Activated T-helper 1 cell treated with anti-CD3 and anti-CD28 coated beads, Interleukin-12 subunit alpha, Interleukin-12 subunit beta, Interleukin-2, Interleukin-4 antibody, amounts not matched to agents 30 ng/mL and 10 ng/mL and 1 ng/mL, durations not matched to agents 14 hours and 24 hours and 36 hours (primary cell): ENCODE measurements at regions of chr2 and their contacts with region 1.

Region 1: DNA sequence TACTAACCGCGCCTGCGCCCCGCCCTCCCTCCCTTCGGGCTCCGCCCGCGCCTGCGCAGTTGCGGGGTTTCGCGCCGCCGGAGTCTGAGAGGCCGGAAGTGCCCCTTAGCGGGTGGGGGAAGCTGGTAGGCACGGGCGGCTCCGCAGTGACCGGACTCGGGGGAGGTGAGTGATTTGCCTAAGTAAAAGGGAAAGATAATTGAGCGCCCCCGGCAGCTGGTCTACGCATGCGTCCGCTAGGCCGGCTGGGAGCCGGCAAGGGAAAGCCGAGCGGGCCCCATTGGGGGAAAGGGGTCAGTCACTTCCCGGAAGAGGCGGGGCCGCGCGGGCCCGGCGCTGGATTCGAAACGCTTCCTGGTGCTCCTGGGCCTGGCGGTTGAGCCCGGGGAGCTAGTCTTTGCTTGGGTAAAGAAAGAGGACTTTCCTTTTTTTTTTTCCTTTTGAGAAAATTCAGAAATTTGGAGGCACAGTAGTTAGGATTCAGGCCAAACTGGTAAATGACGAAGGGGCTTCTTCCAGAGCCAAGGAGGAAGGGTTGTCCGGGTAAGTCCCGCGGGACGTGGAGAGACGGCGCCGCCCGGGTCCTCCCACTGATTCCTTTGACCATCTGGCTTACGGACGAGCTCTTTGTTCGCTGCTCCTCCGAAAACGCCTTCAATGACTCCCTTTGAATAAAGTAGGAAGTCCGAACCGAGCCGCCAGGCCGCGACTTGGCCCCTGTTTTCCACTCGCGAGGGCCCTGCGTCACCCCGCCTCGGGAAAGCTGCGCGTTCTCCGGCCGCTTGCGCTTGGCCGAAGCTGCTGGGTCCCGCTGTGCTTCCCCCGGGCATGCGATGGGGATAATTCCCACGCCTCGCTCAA is at the starts of genes GEN1 and SMC6:
- DNase-seq: peak; percentile 86
- H3K4me3 Mint-ChIP-seq: peak within 1 kb of the TSS; percentile 86
- H3K27ac Mint-ChIP-seq: peak within 1 kb of the TSS; percentile 78
- H3K4me1 Mint-ChIP-seq: peaks cover 69% of the 10 kb centered on the region
- H3K27me3 Mint-ChIP-seq: no peaks in the 10 kb centered on the region
- total RNA-seq, gene GEN1: 28.1 and 31.8 TPM in 2 replicates
- total RNA-seq, gene SMC6: 27.8 and 31.0 TPM in 2 replicates

Region 2: GRCh38 chr2:17518212-17519154 is 235.6 kb before region 1 on chr2 and contains the start of gene RAD51AP2:
- intact Hi-C with region 1: loop called (anchors 10 kb)
- DNase-seq: no peak
- H3K4me3 Mint-ChIP-seq: no peak within 1 kb of the TSS
- H3K27ac Mint-ChIP-seq: no peak within 1 kb of the TSS
- H3K4me1 Mint-ChIP-seq: no peaks in the 10 kb centered on the region
- H3K27me3 Mint-ChIP-seq: peaks cover 30% of the 10 kb centered on the region
- total RNA-seq, gene RAD51AP2: not detected in 2 replicates

Region 3: GRCh38 chr2:17771956-17772355 is 17.9 kb after region 1 on chr2:
- intact Hi-C with region 1: no loop called
- DNase-seq: no peak
- H3K4me3 Mint-ChIP-seq: no peak overlapping the region
- H3K27ac Mint-ChIP-seq: no peak overlapping the region
- H3K4me1 Mint-ChIP-seq: no peaks in the 10 kb centered on the region
- H3K27me3 Mint-ChIP-seq: no peaks in the 10 kb centered on the region

Region 4: DNA sequence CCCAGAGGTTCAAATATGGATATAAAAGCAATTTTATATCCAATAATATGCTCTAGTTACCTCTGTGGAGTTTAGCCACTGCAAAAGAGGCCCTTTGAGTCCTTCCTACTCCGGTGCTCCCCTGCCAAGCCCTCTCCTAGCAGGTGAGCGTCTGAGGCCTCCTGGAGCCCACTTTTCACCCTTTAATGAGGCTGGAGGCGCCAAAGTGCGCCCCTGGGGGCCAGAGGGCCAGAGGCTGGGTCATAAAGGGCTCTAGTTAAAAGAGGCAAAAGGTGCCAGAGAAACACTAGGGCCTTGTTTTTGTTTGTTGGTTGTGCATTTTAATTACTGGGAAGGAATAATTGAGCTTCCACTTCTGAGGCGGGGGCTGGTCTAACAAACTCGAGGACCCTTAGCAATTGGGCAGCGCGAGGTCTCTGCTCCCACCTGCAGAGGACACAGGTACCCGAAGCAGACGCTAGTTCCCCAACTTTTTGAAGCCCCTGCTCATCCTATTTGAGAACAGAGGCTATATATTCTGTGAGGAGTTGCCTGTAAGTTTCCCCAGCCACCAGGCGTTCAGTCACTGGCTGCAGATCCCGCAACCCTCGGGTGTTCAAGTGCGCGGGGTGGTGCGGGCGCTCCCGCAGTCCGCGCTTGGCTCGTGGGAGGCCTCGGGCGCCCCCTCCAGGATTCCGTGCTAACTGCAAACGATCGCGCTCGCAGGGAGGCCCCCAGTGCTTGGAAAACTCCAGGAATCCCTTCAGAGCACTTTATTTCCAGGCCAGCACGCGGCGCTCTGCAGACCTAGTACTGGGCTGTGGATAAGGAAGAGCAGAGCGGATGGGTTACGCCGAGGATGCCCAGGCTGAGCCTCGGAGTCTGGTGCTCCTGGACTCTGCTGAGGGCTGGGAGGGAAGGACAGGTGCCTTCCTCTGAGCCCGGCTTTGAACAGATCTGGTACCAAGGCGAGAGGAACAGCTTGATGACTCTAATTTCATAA is 76.3 kb after region 1 on chr2:
- intact Hi-C with region 1: loop called (anchors 1 kb)
- DNase-seq: peak; percentile 16
- H3K4me3 Mint-ChIP-seq: peak overlapping the region; percentile 2
- H3K27ac Mint-ChIP-seq: no peak overlapping the region
- H3K4me1 Mint-ChIP-seq: peaks cover 6% of the 10 kb centered on the region
- H3K27me3 Mint-ChIP-seq: peaks cover 46% of the 10 kb centered on the region

Region 5: DNA sequence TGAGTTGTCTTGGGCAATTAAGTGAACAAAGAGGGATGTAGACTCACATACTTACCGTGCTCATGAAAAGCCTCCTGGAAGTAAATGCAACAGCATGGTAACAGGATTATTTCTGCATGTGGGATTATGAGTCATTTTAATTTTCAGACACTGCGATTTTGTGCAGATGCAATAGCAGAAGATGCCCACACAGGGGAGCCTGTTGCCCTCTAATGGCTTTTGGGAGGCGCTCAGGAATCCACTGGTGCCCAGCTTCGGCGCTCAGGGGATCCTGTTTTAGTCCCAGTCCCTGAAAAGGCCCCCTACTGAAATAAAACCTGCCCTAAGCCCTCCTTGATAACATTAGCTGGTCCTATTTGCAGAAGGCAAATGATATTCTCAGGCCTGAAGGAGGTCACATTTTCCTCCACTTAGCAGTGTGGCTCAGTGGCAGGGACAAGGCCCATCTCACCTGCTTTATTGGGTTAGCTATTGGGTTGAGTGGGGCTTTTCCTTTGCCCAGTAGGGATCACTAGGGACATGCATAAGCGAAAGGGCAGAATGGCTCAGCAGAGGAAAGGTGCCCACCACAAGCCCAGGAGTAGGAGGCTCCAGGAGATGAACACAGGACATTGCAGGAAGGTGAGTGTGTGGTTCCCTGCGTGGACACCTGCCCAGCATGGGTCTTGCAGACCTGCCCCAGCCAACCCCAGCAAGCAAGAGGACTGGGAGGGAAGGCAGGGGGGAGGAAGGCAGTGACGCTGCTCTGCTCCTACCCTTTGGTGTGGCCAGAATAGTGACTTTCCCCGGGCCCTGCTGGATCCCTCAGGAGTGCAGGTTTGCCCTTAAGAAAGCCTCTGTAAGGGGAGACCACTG is 97.9 kb after region 1 on chr2:
- intact Hi-C with region 1: no loop called
- DNase-seq: peak; percentile 7
- H3K4me3 Mint-ChIP-seq: no peak overlapping the region
- H3K27ac Mint-ChIP-seq: no peak overlapping the region
- H3K4me1 Mint-ChIP-seq: no peaks in the 10 kb centered on the region
- H3K27me3 Mint-ChIP-seq: peaks cover 7% of the 10 kb centered on the region